Spleen (tissue), 13 donors: ENCODE measurements at regions of chr12 and their contacts with region 1.

Region 1: GRCh38 chr12:123983822-123984485 is 10.9 kb downstream of the ZNF664 start:
- DNase-seq: no peak
- H3K4me3 ChIP-seq: no peak overlapping the region
- H3K27ac ChIP-seq: no peak overlapping the region
- H3K4me1 ChIP-seq: peaks cover 0 to 40% (median 16%) of the 10 kb centered on the region in 6 donors
- H3K27me3 ChIP-seq: no peaks in the 10 kb centered on the region
- CTCF ChIP-seq: peak; percentile 27 to 74 (median 54)
- POLR2A ChIP-seq: no peak

Region 2: DNA sequence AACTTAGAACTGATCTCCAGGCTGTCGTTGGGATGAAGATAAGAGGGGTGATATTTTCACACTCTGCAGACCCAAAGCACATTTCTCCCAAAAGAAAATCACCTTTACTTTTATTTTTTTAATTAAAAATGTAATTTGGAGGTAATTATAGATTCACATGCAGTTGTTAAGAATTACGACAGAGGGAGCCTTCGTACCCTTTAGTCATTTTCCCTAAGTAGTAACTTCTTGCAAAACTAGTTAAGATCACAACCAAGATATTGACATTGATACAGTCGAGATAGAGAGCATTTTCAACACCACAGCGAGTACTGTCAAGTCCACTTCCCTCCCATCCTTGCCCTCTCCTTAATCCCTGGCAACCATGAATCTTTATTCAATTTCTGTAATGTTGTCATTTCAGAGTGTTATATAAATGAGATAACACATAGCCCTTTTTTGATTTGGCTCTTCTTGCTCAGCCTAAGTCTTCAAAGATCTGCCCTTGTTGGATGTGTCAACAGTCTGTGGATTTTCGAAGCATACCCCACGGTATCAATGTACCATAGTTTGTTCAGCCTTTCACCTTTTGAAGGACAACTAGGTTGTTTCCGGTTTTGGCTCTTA is 182.3 kb before region 1 on chr12:
- intact Hi-C with region 1: loop called (anchors 10 kb)
- DNase-seq: no peak
- H3K4me3 ChIP-seq: no peak overlapping the region
- H3K27ac ChIP-seq: no peak overlapping the region
- H3K4me1 ChIP-seq: no peaks in the 10 kb centered on the region
- H3K27me3 ChIP-seq: peaks cover 0 to 6% (median 0%) of the 10 kb centered on the region in 7 donors
- CTCF ChIP-seq: peak in 2 of 11 experiments; percentile 8 to 20
- POLR2A ChIP-seq: no peak

Region 3: GRCh38 chr12:123905319-123905925 is 78.5 kb before region 1 on chr12:
- intact Hi-C with region 1: loop called (anchors 2 kb)
- DNase-seq: no peak
- H3K4me3 ChIP-seq: no peak overlapping the region
- H3K27ac ChIP-seq: no peak overlapping the region
- H3K4me1 ChIP-seq: peaks cover 0 to 11% (median 3%) of the 10 kb centered on the region in 6 donors
- H3K27me3 ChIP-seq: peaks cover 0 to 27% (median 0%) of the 10 kb centered on the region in 7 donors
- CTCF ChIP-seq: peak; percentile 69 to 86 (median 77)
- POLR2A ChIP-seq: no peak

Region 4: DNA sequence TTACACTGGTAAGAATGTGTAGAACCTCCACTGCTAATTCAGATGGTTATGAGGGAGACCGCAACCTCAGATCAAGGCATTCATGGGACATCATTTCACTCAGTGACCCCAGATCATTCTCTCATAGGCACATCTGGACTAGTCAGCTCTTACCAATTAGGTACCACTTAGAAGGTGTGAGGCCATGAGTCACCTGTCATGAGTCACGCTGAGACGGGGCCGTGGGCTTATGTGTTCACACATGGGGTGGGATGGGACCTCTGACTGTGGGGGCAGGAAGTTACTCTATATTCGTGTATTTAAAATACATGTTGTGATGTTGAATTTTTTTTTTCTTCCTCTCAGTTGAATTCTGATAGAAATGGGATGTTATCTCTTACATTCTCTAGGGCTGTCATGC is 67.2 kb before region 1 on chr12:
- intact Hi-C with region 1: no loop called
- DNase-seq: peak; percentile 63
- H3K4me3 ChIP-seq: no peak overlapping the region
- H3K27ac ChIP-seq: no peak overlapping the region
- H3K4me1 ChIP-seq: no peaks in the 10 kb centered on the region
- H3K27me3 ChIP-seq: peaks cover 0 to 5% (median 0%) of the 10 kb centered on the region in 7 donors
- CTCF ChIP-seq: no peak
- POLR2A ChIP-seq: no peak

Region 5: GRCh38 chr12:125100551-125101434 is 1116.8 kb after region 1 on chr12:
- intact Hi-C with region 1: no loop called
- DNase-seq: no peak
- H3K4me3 ChIP-seq: no peak overlapping the region
- H3K27ac ChIP-seq: no peak overlapping the region
- H3K4me1 ChIP-seq: peaks cover 0 to 12% (median 3%) of the 10 kb centered on the region in 6 donors
- H3K27me3 ChIP-seq: no peaks in the 10 kb centered on the region
- CTCF ChIP-seq: no peak
- POLR2A ChIP-seq: no peak